ENCODE measurements at regions of chr6 and their contacts with region 1.

Region 1: GRCh38 chr6:56922645-56923044 is 32.3 kb upstream of the BEND6 start:
- DNase-seq: no peak
- H3K4me3 Mint-ChIP-seq: no peak overlapping the region
- H3K27ac Mint-ChIP-seq: no peak overlapping the region
- H3K4me1 Mint-ChIP-seq: peaks cover 11% of the 10 kb centered on the region
- H3K27me3 Mint-ChIP-seq: no peaks in the 10 kb centered on the region
- CTCF ChIP-seq: no peak

Region 2: GRCh38 chr6:56938649-56939191 is 16.1 kb after region 1 on chr6:
- CTCF ChIA-PET with region 1: interaction called, 5 read pairs
- POLR2A ChIA-PET with region 1: interaction called, 10 read pairs
- intact Hi-C with region 1: no loop called
- DNase-seq: peak; percentile 100
- H3K4me3 Mint-ChIP-seq: peak overlapping the region; percentile 8
- H3K27ac Mint-ChIP-seq: peak overlapping the region; percentile 17
- H3K4me1 Mint-ChIP-seq: peaks cover 15% of the 10 kb centered on the region
- H3K27me3 Mint-ChIP-seq: no peaks in the 10 kb centered on the region
- CTCF ChIP-seq: no peak

Measured in MCF 10A (cell line).